ENCODE measurements at regions of chr1 and their contacts with region 1.

Region 1: DNA sequence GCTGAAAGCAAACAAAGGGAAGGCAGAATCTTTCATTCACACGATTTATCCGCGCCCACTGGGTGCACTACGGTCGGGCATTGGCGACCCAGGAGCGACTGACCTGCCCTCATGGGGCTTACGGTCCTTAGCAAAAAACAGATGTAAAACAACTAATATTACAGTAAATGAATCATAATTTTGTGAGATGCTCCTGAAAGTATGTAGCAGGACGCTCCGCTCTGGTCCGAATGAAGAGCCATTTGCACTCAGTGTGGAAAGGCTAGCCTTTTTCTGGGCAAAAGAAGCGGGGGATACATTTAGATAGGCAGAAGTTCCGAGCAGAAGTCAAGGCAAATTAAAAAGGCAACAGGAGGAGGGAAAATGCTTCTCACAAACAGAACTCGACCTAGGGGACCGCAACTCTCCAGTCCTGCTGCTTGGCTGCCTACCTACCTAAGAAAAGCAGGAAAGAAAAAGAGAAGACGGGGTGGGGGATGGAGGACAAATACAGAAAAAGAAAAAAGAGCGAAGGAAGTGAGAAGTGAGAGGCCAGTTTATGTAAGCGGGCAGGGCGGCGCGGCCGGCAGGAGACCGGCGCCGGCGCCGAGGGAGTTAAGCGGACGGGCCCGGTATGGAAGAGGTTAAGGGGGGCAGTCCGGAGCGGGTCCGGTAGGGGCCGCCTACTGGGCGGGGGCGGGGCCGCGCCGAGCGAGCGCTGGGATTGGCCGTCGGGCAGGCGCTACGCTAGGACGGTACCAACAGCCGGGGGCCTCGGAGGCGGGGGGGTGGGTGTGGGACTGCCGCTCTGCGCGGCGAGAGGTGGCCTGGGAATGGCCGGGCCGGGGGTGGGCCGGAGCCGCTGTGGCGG is at the start of gene FAM20B:
- DNase-seq: peak; percentile 77 to 97 (median 94)

Region 2: GRCh38 chr1:179081687-179082332 is 56.5 kb after region 1 on chr1 and contains the start of gene TOR3A:
- intact Hi-C with region 1: loop called (anchors 5 kb)
- DNase-seq: peak; percentile 86 to 98 (median 95)

Region 3: GRCh38 chr1:179293340-179294327 is 268.3 kb after region 1 on chr1 and contains the start of gene SOAT1:
- intact Hi-C with region 1: loop called (anchors 10 kb)
- DNase-seq: peak; percentile 88 to 98 (median 96)

Region 4: GRCh38 chr1:180154325-180155181 is 1129.2 kb after region 1 on chr1 and contains the start of gene QSOX1:
- intact Hi-C with region 1: loop called (anchors 10 kb)
- DNase-seq: peak; percentile 76 to 97 (median 92)